ENCODE measurements at regions of chr2 and their contacts with region 1.

Region 1: GRCh38 chr2:186460465-186460864 is 25.6 kb upstream of the ZC3H15 start:
- DNase-seq: no peak
- CTCF ChIP-seq: peak; percentile 43

Region 2: DNA sequence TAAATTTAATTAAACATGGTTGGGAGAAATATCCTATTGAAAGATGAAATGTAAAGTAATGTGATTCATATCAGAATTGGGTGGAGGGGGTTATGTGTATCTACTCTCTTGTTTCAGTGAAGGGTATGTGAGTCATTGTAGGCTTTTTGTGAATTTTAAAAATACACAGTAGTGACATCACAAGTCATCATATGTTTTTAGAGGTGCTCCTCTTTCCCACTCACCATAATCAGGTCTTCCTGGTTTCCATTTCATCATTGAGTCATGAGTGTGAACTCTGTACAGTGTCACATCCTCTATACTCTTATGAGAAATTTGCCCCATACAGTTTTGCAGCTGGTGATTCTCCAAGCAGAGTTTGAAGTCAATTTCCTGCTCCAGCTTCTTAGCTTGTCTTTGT is 703.1 kb before region 1 on chr2:
- in situ Hi-C with region 1: loop called (anchors 25 kb)
- DNase-seq: no peak
- CTCF ChIP-seq: no peak

Region 3: DNA sequence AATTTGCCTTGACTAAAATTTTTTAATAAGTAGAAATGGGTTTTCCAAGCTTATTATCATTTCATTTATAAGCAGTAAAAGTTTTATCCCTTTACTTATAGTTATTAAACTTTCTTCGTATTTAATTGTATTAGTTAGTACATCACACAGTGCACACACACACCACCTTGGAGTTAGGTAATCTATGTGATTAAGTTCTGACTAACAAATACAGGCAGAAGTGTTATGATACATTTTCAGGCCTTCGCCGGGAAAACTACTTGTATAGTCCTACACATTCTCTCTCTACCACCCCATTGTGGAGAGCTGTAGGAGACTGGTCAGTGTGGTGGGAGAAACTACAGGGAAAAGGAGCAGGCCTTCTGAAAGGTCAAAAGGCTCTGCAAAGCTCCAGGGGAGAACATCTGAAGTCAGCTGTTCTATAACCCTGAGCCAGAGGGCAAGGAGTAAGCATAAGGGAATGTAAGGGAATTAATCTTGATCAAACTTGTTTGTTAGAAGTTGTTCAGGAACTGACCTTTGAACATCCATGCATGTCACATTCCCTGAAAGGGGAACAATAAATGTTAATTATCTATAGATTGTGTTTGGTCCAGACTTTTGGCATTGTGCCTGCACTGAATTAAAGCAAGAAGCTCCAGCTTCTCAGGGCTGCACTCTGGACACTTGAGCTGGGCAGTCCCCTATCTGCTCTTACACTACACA is 490.2 kb before region 1 on chr2:
- in situ Hi-C with region 1: loop called (anchors 25 kb)
- DNase-seq: no peak
- CTCF ChIP-seq: no peak

Region 4: GRCh38 chr2:186281726-186282125 is 178.7 kb before region 1 on chr2:
- in situ Hi-C with region 1: no loop called
- DNase-seq: no peak
- CTCF ChIP-seq: no peak

Measured in GM13976 (cell line).